ENCODE measurements at regions of chr20 and their contacts with region 1.

Region 1: DNA sequence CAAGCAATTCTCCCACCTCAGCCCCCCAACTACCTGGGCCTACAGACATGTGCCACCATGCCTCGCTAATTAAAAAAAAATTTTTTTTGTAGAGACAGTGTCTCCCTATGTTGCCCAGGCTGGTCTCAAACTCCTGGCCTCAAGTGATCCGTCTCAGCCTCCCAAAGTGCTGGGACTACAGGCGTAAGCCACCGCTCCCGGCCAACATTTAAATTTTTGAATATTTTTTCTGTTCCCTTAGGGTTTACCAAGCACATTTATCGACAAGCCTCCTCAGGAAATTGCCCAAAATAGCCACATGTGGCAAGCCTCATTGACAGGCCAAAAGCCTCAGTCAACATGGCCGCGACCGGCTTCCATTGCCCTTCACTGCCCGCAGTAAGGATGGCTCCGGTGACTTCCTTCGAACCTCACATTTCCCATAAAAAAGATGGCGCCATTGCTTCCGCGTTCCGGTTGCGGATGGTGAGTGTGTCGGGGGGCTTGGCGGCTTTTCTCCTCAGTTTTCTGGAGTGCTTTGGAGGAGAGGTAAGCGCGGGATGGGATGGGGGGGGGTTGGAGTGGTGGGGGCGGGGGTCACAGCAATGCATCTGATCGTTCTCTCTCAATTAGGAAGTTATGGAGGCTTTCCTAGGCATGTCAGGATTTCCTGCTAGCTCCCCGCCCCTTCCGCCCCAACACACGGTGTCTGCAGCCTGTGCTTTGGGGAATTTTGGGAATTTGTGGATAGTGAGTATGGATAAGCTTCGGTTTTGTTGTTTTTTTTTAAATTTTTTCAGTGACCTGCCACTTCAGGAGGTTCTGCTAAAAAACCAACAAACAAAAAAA is at the start of gene SHLD1:
- DNase-seq: peak; percentile 90 to 92
- H3K4me3 ChIP-seq: peak within 1 kb of the TSS; percentile 55
- H3K4me3 Mint-ChIP-seq: peak within 1 kb of the TSS; percentile 74
- H3K27ac Mint-ChIP-seq: peak within 1 kb of the TSS; percentile 89
- H3K4me1 ChIP-seq: peaks cover 71% of the 10 kb centered on the region
- H3K4me1 Mint-ChIP-seq: peaks cover 40% of the 10 kb centered on the region
- H3K27me3 ChIP-seq: no peaks in the 10 kb centered on the region
- H3K27me3 Mint-ChIP-seq: no peaks in the 10 kb centered on the region
- CTCF ChIP-seq: no peak
- total RNA-seq, gene SHLD1: 4.8 and 5.4 TPM in 2 replicates

Region 2: GRCh38 chr20:5633751-5634365 is 116.3 kb before region 1 on chr20:
- CTCF ChIA-PET with region 1: no interaction called
- POLR2A ChIA-PET with region 1: no interaction called
- intact Hi-C with region 1: no loop called
- DNase-seq: no peak
- H3K4me3 ChIP-seq: no peak overlapping the region
- H3K4me3 Mint-ChIP-seq: no peak overlapping the region
- H3K27ac Mint-ChIP-seq: no peak overlapping the region
- H3K4me1 ChIP-seq: no peaks in the 10 kb centered on the region
- H3K4me1 Mint-ChIP-seq: no peaks in the 10 kb centered on the region
- H3K27me3 ChIP-seq: no peaks in the 10 kb centered on the region
- H3K27me3 Mint-ChIP-seq: no peaks in the 10 kb centered on the region
- CTCF ChIP-seq: no peak

Region 3: DNA sequence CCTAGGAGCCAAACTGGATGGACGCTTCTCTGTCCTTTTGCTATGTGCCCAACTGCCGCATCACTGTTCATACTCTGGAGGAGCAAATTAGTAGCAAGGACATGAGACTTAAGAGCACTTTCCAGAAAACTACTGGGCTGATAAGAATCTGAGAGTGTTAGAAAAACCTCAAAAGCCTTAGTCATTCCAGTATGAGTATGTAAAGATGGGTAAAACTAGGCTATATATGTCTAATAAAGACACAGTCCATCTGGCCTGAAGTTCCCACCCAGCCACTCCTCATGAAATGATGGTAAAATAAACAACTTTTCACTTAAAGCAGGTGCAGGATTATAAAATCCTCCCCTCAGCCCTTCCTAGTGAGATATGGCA is 30.7 kb after region 1 on chr20:
- CTCF ChIA-PET with region 1: no interaction called
- POLR2A ChIA-PET with region 1: no interaction called
- intact Hi-C with region 1: loop called (anchors 2 kb)
- DNase-seq: no peak
- H3K4me3 ChIP-seq: no peak overlapping the region
- H3K4me3 Mint-ChIP-seq: no peak overlapping the region
- H3K27ac Mint-ChIP-seq: no peak overlapping the region
- H3K4me1 ChIP-seq: peaks cover 38% of the 10 kb centered on the region
- H3K4me1 Mint-ChIP-seq: peaks cover 14% of the 10 kb centered on the region
- H3K27me3 ChIP-seq: no peaks in the 10 kb centered on the region
- H3K27me3 Mint-ChIP-seq: no peaks in the 10 kb centered on the region
- CTCF ChIP-seq: no peak